ENCODE measurements at regions of chr1 and their contacts with region 1.

Region 1: DNA sequence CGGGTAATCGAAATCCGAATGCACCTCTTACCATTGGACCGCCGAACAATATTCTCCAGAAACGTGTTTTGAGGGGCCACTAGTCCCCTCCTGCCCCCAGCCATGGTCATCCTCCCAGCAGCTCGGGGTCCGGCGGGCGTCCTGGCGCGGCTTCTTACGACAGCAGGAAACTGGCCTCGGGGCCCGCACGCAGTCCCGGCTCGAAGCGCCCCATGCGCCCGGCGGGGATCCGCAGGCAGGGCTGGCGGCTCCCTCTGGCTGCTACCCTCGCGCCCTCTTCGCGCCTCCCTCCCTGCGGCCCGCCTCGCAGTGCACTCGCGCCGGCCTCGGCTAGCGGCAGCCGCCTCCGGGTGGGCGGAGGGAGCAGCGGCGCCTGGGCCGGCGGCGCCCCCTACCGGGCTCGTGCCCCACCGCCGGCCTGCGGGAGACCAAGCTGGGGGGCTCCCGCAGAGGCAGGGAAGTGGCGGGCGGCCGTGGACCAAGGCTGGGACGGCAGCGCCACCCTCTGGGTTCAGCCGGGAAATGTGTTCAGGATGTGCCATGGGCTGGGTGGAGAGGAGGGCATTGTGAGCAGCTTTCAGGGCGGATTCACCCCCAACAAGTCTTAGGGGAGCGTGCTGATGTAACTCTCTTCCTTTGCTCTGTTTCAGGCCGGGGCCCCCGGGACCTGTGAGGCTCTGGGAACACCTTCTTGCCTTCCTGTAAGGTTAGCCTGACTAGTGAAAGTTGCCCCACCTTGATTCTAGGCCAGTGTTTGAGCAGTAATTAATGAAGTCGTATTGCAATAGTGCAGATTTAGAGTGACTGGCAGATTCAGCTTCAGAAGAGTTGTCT is at the start of gene KCNH1:
- DNase-seq: peak; percentile 73
- H3K4me3 Mint-ChIP-seq: peak within 1 kb of the TSS; percentile 46
- H3K27ac Mint-ChIP-seq: no peak within 1 kb of the TSS
- H3K4me1 Mint-ChIP-seq: peaks cover 8% of the 10 kb centered on the region
- H3K27me3 Mint-ChIP-seq: peaks cover 74% of the 10 kb centered on the region
- total RNA-seq, gene KCNH1: not detected

Region 2: DNA sequence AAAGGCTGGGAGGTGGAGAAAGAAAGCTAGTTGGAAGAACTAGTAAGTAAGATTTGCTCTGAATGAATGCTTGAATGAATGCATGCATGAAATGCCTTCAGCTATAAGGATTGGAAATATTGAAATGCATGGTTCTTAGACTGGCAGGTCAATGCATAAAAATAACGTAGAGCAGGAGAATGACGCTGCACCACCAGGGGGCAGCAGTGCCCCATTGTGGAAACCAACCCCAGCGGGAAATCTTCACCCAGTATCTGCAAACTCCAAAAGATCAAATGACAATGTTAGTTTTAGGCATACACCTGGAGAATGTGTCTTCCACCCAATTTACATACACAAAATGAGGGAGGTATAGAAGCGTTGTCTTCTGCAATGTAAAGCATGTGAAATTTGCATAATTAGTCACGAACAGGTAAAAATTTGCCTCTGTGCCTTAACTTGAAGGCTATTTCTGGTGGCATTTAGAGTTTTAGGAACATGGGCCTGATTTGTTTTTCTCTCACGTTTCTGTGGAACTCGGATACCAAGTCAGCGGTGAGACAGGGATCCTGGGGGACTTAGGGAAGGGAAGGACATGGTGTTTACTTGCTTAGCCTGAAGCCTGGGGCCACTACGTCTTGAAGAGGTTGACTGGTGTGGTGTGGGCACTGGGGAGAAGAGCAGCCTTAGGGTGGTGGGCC is 726.7 kb before region 1 on chr1:
- CTCF ChIA-PET with region 1: interaction called, 12 read pairs
- POLR2A ChIA-PET with region 1: no interaction called
- DNase-seq: peak; percentile 74
- H3K4me3 Mint-ChIP-seq: no peak overlapping the region
- H3K27ac Mint-ChIP-seq: no peak overlapping the region
- H3K4me1 Mint-ChIP-seq: no peaks in the 10 kb centered on the region
- H3K27me3 Mint-ChIP-seq: peaks cover 10% of the 10 kb centered on the region

Region 3: DNA sequence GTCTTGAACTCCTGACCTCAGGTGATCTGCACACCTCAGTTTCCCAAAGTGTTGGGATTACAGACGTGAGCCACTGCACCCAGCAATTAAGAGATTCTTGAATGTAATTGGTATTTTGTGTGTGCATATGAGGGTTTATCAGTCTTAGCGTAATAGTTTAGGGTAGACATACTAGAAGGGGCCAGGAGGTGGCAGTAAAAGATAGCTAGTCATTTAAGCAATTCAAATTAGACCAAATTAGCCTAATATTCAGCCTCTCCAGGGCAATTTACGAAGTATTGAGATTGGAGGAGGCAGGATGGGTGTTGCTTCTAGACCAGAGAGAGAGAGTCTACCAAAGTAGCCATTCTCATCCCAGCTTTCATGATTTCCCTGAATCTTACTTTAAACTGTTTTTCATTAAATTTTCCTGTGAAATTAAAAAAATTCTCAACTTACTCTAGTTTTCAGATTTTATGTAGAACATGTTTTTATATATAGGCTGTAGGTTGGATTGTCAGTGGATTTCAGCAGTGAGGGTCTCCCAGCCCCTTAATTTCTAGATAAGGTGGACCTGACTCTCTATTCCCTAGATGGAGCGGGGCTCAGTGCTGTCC is 685.7 kb before region 1 on chr1:
- CTCF ChIA-PET with region 1: interaction called, 29 read pairs
- POLR2A ChIA-PET with region 1: interaction called, 4 read pairs
- DNase-seq: no peak
- H3K4me3 Mint-ChIP-seq: no peak overlapping the region
- H3K27ac Mint-ChIP-seq: no peak overlapping the region
- H3K4me1 Mint-ChIP-seq: peaks cover 19% of the 10 kb centered on the region
- H3K27me3 Mint-ChIP-seq: peaks cover 11% of the 10 kb centered on the region

Region 4: DNA sequence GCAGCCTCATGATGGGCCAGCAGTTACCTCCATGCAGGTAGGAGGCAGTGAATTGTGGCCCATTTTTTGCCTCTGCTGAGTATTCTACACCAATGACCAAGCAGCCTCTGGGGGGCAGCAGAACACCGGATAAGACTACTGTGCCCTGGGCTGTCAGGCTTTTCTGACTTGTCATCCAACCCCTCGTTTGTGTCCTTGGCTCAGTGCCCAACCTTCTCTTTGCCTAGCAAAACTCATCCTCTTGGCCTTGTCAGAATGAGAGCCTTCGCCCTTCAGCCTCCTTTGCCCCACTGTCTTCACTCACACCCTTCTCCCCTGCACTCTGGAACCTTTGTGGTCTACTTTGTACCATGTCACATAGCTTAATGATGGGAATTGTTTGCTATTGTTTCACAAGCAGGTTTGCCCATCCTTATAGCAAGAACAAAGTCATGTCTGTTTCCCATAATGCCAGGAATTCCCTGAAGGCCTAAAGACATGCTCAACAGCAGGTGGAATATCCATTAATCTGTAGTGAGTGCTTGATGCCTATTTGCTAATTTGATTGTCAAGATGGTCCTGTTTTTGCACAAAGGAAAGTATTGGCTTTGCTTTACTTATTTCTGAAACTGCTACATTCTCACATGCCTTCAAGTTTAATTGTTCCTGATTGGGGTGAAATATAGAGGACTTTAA is 549.5 kb before region 1 on chr1:
- CTCF ChIA-PET with region 1: interaction called, 14 read pairs
- POLR2A ChIA-PET with region 1: no interaction called
- DNase-seq: peak; percentile 70
- H3K4me3 Mint-ChIP-seq: no peak overlapping the region
- H3K27ac Mint-ChIP-seq: no peak overlapping the region
- H3K4me1 Mint-ChIP-seq: no peaks in the 10 kb centered on the region
- H3K27me3 Mint-ChIP-seq: no peaks in the 10 kb centered on the region

Region 5: DNA sequence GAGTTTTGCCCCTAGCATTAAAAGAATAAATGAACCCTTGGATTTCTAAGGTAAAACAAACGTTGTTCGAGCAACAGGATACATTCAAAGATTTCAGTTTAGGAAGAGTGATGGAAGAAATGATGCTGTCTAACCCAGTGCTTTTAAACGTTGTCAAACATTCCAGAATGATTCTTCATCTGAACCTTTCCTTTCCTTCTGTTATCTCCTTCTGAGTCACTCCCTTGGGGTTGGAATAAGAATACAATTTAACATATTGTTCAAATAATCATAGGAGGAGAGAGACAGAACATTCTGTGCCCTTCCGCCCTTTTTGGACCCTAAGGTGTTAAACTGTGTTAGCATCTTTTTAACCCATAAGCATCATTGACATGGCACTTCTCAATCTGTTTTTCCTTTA is 64.1 kb after region 1 on chr1:
- CTCF ChIA-PET with region 1: no interaction called
- POLR2A ChIA-PET with region 1: no interaction called
- DNase-seq: no peak
- H3K4me3 Mint-ChIP-seq: no peak overlapping the region
- H3K27ac Mint-ChIP-seq: no peak overlapping the region
- H3K4me1 Mint-ChIP-seq: no peaks in the 10 kb centered on the region
- H3K27me3 Mint-ChIP-seq: peaks cover 10% of the 10 kb centered on the region